Left ventricle myocardium superior (tissue), 1 donor: ENCODE measurements at regions of chrX and their contacts with region 1.

Region 1: GRCh38 chrX:106791495-106791894 is 11.0 kb upstream of the TBC1D8B start:
- DNase-seq: no peak
- ATAC-seq: no peak

Region 2: GRCh38 chrX:106481341-106481740 is 310.2 kb before region 1 on chrX:
- intact Hi-C with region 1: loop called (anchors 10 kb)
- DNase-seq: no peak
- ATAC-seq: peak; percentile 54